ENCODE measurements at regions of chrX and their contacts with region 1.

Region 1: DNA sequence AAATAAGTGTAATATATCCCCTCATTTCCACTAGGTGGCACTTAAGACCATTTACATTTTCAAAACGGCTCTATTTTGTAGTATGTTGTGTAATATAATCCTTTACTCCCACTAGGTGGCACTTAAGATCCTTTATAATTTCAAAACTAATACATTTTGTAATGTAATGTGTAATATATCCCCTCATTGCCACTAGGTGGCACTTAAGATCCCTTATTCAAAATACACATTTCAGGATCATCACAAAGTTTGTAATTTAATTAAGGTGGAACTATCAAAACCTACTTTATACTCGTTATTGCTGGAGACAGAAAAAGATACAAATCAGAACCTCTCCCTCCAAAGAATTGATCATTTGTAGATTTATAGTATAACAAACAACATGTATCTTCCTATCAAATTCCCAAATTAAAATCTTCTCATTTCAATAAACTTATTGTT is 132.5 kb downstream of the ARHGAP6 start:
- DNase-seq: peak in 1 of 2 experiments; percentile 18
- H3K4me3 ChIP-seq: no peak overlapping the region
- H3K4me3 Mint-ChIP-seq: no peak overlapping the region
- H3K27ac Mint-ChIP-seq: no peak overlapping the region
- H3K4me1 ChIP-seq: peaks cover 23% of the 10 kb centered on the region
- H3K4me1 Mint-ChIP-seq: no peaks in the 10 kb centered on the region
- H3K27me3 ChIP-seq: no peaks in the 10 kb centered on the region
- H3K27me3 Mint-ChIP-seq: no peaks in the 10 kb centered on the region
- CTCF ChIP-seq: peak; percentile 58 to 68

Region 2: GRCh38 chrX:11381464-11381863 is 151.8 kb before region 1 on chrX:
- CTCF ChIA-PET with region 1: no interaction called
- POLR2A ChIA-PET with region 1: no interaction called
- intact Hi-C with region 1: loop called (anchors 1 kb)
- DNase-seq: peak; percentile 33 to 54
- H3K4me3 ChIP-seq: no peak overlapping the region
- H3K4me3 Mint-ChIP-seq: no peak overlapping the region
- H3K27ac Mint-ChIP-seq: no peak overlapping the region
- H3K4me1 ChIP-seq: peaks cover 19% of the 10 kb centered on the region
- H3K4me1 Mint-ChIP-seq: peaks cover 3% of the 10 kb centered on the region
- H3K27me3 ChIP-seq: no peaks in the 10 kb centered on the region
- H3K27me3 Mint-ChIP-seq: no peaks in the 10 kb centered on the region
- CTCF ChIP-seq: peak; percentile 44 to 45

Region 3: GRCh38 chrX:11461201-11462001 is 71.8 kb before region 1 on chrX:
- CTCF ChIA-PET with region 1: interaction called, 5 read pairs
- POLR2A ChIA-PET with region 1: no interaction called
- intact Hi-C with region 1: loop called (anchors 1 kb)
- DNase-seq: peak; percentile 63 to 79
- H3K4me3 ChIP-seq: no peak overlapping the region
- H3K4me3 Mint-ChIP-seq: peak overlapping the region; percentile 41
- H3K27ac Mint-ChIP-seq: peak overlapping the region; percentile 83
- H3K4me1 ChIP-seq: peaks cover 44% of the 10 kb centered on the region
- H3K4me1 Mint-ChIP-seq: peaks cover 17% of the 10 kb centered on the region
- H3K27me3 ChIP-seq: no peaks in the 10 kb centered on the region
- H3K27me3 Mint-ChIP-seq: no peaks in the 10 kb centered on the region
- CTCF ChIP-seq: no peak

Region 4: DNA sequence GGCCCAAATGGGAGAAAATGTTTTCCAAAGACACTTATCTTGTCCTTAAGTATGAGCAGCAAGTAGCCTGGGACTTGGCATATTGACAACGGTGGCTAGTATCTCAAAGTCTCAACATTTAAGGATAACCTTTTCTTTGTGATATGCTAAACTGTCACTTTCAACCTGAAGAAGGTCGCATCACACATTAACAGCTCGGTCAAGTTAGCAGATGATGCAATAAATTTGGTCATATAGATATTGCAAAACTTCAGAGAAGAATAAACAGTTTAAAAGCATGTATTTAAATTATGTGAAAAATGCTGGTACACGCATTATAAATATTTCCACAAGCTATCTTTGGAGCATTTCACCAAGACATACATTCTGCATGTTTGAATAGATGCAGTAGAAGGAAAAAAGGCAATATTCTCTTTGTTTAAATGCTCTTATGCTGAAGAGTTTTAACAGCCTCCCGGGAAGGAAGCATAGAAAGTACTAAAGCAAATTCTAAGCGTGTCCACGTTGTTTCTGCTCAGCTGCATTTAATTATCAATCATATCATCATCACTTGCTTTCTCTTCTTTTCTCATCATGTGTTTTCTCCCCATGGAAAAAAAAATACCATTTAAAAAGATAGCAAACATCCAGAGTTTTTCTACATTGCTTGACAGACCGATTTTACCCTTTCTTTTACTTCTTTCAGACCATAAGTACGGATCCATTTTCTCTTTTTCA is 108.3 kb after region 1 on chrX:
- CTCF ChIA-PET with region 1: no interaction called
- POLR2A ChIA-PET with region 1: no interaction called
- intact Hi-C with region 1: no loop called
- DNase-seq: no peak
- H3K4me3 ChIP-seq: no peak overlapping the region
- H3K4me3 Mint-ChIP-seq: no peak overlapping the region
- H3K27ac Mint-ChIP-seq: no peak overlapping the region
- H3K4me1 ChIP-seq: no peaks in the 10 kb centered on the region
- H3K4me1 Mint-ChIP-seq: no peaks in the 10 kb centered on the region
- H3K27me3 ChIP-seq: no peaks in the 10 kb centered on the region
- H3K27me3 Mint-ChIP-seq: no peaks in the 10 kb centered on the region
- CTCF ChIP-seq: no peak

Region 5: GRCh38 chrX:11724122-11725017 is 191.1 kb after region 1 on chrX:
- CTCF ChIA-PET with region 1: no interaction called
- POLR2A ChIA-PET with region 1: interaction called, 4 read pairs
- intact Hi-C with region 1: loop called (anchors 2 kb)
- DNase-seq: peak in 1 of 2 experiments; percentile 17
- H3K4me3 ChIP-seq: no peak overlapping the region
- H3K4me3 Mint-ChIP-seq: no peak overlapping the region
- H3K27ac Mint-ChIP-seq: no peak overlapping the region
- H3K4me1 ChIP-seq: no peaks in the 10 kb centered on the region
- H3K4me1 Mint-ChIP-seq: no peaks in the 10 kb centered on the region
- H3K27me3 ChIP-seq: no peaks in the 10 kb centered on the region
- H3K27me3 Mint-ChIP-seq: no peaks in the 10 kb centered on the region
- CTCF ChIP-seq: peak; percentile 42 to 53

Region 6: GRCh38 chrX:11758400-11759171 is 225.4 kb after region 1 on chrX:
- CTCF ChIA-PET with region 1: interaction called, 3 read pairs
- POLR2A ChIA-PET with region 1: no interaction called
- intact Hi-C with region 1: loop called (anchors 1 kb)
- DNase-seq: peak; percentile 79 to 87
- H3K4me3 ChIP-seq: peak overlapping the region; percentile 92
- H3K4me3 Mint-ChIP-seq: peak overlapping the region; percentile 96
- H3K27ac Mint-ChIP-seq: peak overlapping the region; percentile 94
- H3K4me1 ChIP-seq: peaks cover 4% of the 10 kb centered on the region; the same call in 1 of the 2 replicates
- H3K4me1 Mint-ChIP-seq: peaks cover 6% of the 10 kb centered on the region
- H3K27me3 ChIP-seq: no peaks in the 10 kb centered on the region
- H3K27me3 Mint-ChIP-seq: no peaks in the 10 kb centered on the region
- CTCF ChIP-seq: peak; percentile 25 to 73

Region 7: GRCh38 chrX:11770320-11770719 is 237.1 kb after region 1 on chrX:
- CTCF ChIA-PET with region 1: no interaction called
- POLR2A ChIA-PET with region 1: no interaction called
- intact Hi-C with region 1: loop called (anchors 1 kb)
- DNase-seq: peak in 1 of 2 experiments; percentile 22
- H3K4me3 ChIP-seq: no peak overlapping the region
- H3K4me3 Mint-ChIP-seq: no peak overlapping the region
- H3K27ac Mint-ChIP-seq: no peak overlapping the region
- H3K4me1 ChIP-seq: no peaks in the 10 kb centered on the region
- H3K4me1 Mint-ChIP-seq: no peaks in the 10 kb centered on the region
- H3K27me3 ChIP-seq: no peaks in the 10 kb centered on the region
- H3K27me3 Mint-ChIP-seq: no peaks in the 10 kb centered on the region
- CTCF ChIP-seq: peak; percentile 61 to 73

Region 8: DNA sequence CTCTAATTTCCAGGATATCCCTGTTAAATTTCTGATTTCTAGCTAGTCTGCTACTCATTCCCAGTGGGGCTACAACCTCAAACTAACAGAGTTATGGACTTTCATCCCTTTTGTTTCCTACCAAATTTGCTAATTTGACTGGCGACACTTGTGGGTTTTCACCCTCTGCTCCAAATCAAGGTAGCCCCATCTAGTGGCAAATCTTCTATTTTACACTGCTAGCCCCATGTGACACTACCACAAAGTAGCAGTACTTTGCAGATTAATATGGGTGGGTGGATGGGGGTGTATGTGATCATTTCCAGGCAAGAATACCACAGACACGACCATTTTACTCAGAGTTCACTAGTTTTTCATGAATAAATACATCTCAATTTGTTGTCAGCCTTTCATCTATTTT is 375.1 kb after region 1 on chrX:
- CTCF ChIA-PET with region 1: no interaction called
- POLR2A ChIA-PET with region 1: no interaction called
- intact Hi-C with region 1: loop called (anchors 2 kb)
- DNase-seq: peak in 1 of 2 experiments; percentile 6
- H3K4me3 ChIP-seq: no peak overlapping the region
- H3K4me3 Mint-ChIP-seq: no peak overlapping the region
- H3K27ac Mint-ChIP-seq: no peak overlapping the region
- H3K4me1 ChIP-seq: no peaks in the 10 kb centered on the region
- H3K4me1 Mint-ChIP-seq: no peaks in the 10 kb centered on the region
- H3K27me3 ChIP-seq: no peaks in the 10 kb centered on the region
- H3K27me3 Mint-ChIP-seq: peaks cover 5% of the 10 kb centered on the region
- CTCF ChIP-seq: peak in 1 of 2 experiments; percentile 25